Endothelial cell of umbilical vein (primary cell): ENCODE measurements at regions of chr16 and their contacts with region 1.

Region 1: DNA sequence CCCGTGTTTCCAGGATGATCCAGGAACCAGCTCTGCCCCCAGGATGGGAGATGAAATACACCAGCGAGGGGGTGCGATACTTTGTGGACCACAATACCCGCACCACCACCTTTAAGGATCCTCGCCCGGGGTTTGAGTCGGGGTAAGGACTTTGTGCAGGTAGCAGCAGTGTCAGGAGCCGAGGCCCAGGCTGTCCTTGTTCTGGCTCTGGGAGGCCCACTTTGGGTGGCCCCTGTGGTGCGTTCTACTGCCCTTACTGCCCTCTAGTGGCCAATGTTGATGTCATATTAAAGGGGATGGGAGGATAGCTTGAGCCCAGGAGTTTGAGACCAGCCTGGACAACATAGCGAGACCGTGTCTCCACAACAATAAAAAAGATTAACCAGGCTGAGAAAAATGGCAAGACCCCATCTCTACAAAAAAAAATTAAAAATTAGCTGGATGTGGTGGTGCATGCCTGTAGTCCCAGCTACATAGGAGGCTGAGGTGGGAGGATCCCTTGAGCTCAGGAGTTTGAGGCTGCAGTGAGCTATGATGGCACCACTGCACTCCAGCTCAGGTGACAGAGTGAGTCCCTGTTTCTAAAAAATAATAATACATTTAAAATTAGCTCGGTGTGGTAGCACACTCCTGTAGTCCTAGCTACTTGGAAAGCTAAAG is 20.9 kb upstream of the CLEC18A start:
- DNase-seq: peak; percentile 58
- H3K4me3 ChIP-seq: no peak overlapping the region
- H3K27ac ChIP-seq: no peak overlapping the region
- H3K4me1 ChIP-seq: peaks cover 3% of the 10 kb centered on the region
- H3K27me3 ChIP-seq: no peaks in the 10 kb centered on the region
- CTCF ChIP-seq: peak; percentile 64 to 72
- POLR2A ChIP-seq: no peak

Region 2: GRCh38 chr16:69554495-69554894 is 375.8 kb before region 1 on chr16:
- CTCF ChIA-PET with region 1: no interaction called
- POLR2A ChIA-PET with region 1: no interaction called
- dilution Hi-C with region 1: no loop called
- intact Hi-C with region 1: no loop called
- DNase-seq: no peak
- H3K4me3 ChIP-seq: no peak overlapping the region
- H3K27ac ChIP-seq: no peak overlapping the region
- H3K4me1 ChIP-seq: no peaks in the 10 kb centered on the region
- H3K27me3 ChIP-seq: no peaks in the 10 kb centered on the region
- CTCF ChIP-seq: no peak
- POLR2A ChIP-seq: no peak

Region 3: DNA sequence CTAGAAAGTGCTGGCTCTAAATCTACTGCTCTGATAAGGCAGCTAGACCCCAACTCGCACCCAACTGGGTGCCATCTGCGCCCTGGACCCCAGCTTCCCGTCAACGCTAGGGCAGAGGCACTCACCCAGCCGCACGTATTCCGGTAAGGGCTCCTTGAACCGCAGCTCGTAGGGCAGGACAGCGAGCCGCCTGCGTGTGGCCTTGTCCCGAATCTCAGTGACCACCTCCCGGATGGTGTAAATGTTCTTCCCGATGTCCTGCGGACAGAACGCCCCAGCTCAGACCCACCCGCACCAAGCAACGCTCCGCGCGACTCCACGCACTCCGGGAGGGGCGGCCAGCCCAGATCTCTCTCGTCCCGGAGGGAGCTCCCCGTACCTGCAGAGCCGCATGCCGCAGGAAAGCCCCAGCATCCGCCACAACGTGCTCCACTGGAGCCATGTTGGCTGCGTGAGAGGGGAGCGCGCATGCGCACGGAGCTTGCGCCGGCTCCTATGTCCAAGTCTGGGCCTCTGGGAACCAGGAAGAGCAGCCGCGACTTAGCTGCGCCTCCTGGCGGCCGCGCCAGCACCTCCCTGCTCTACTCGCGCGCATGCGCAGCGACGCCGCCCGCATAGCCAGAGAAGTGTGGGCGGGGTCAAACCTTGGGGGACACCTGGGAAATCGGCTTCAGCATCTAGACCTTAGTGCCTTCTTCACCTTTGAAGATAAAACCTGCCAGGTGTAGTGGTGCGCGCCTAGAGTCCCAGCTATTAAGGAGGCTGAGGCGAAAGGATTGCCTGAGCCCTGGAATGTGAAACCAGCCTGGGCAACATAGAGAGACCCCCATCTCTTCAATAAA is 175.6 kb before region 1 on chr16 and contains the start of gene NOB1:
- CTCF ChIA-PET with region 1: interaction called, 17 read pairs
- POLR2A ChIA-PET with region 1: no interaction called
- dilution Hi-C with region 1: no loop called
- intact Hi-C with region 1: no loop called
- DNase-seq: peak; percentile 98
- H3K4me3 ChIP-seq: peak within 1 kb of the TSS; percentile 39 to 87 (median 82)
- H3K27ac ChIP-seq: peak within 1 kb of the TSS; percentile 11
- H3K4me1 ChIP-seq: peaks cover 8% of the 10 kb centered on the region
- H3K27me3 ChIP-seq: no peaks in the 10 kb centered on the region
- CTCF ChIP-seq: peak; percentile 99 to 100
- POLR2A ChIP-seq: peak; percentile 97
- total RNA-seq, gene NOB1: 58.6 and 65.4 TPM in 2 replicates

Region 4: DNA sequence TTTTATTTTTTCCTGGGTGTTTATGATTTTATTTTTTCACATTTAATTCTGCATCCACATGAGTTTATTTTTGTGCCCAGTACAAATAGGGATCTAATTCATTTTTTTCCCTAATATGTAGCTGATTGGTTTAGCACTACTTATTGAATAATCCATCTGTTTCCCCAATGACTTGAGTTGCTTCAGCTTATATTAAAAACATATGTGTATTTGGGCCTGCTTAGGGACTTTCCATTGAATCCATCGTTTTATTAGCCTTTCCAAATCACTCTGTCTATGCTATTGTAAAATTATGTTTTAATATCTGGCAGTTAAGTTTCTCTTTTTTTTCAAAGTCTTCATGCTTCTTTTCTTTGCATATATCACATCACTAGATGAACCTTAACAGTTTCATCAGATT is 126.0 kb before region 1 on chr16:
- CTCF ChIA-PET with region 1: interaction called, 320 read pairs
- POLR2A ChIA-PET with region 1: no interaction called
- dilution Hi-C with region 1: no loop called
- intact Hi-C with region 1: no loop called
- DNase-seq: no peak
- H3K4me3 ChIP-seq: no peak overlapping the region
- H3K27ac ChIP-seq: no peak overlapping the region
- H3K4me1 ChIP-seq: no peaks in the 10 kb centered on the region
- H3K27me3 ChIP-seq: no peaks in the 10 kb centered on the region
- CTCF ChIP-seq: no peak
- POLR2A ChIP-seq: no peak

Region 5: GRCh38 chr16:69839798-69840409 is 90.3 kb before region 1 on chr16:
- CTCF ChIA-PET with region 1: interaction called, 13 read pairs
- POLR2A ChIA-PET with region 1: no interaction called
- dilution Hi-C with region 1: no loop called
- intact Hi-C with region 1: no loop called
- DNase-seq: peak; percentile 19
- H3K4me3 ChIP-seq: no peak overlapping the region
- H3K27ac ChIP-seq: no peak overlapping the region
- H3K4me1 ChIP-seq: peaks cover 5% of the 10 kb centered on the region
- H3K27me3 ChIP-seq: no peaks in the 10 kb centered on the region
- CTCF ChIP-seq: no peak
- POLR2A ChIP-seq: no peak

Region 6: DNA sequence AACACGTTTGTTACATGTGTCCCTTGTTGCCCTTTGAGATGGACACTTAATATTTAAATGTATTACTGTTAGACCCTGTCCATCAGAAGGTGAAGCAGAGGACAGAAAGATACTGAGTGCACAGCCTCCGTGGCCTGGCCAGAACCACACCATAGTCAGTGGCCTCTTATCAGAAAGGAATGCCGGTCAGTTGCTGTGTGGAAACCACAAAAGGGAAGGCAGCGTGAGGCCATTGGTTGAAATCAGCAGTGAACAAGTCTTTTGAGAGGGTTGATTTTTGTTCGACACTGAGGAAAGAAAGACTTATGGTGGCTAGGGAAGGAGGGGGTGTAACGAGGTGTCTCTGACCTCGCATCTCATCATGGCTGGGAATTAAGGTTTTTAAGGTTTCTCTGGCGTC is 64.5 kb before region 1 on chr16:
- CTCF ChIA-PET with region 1: interaction called, 14 read pairs
- POLR2A ChIA-PET with region 1: no interaction called
- dilution Hi-C with region 1: no loop called
- intact Hi-C with region 1: no loop called
- DNase-seq: no peak
- H3K4me3 ChIP-seq: no peak overlapping the region
- H3K27ac ChIP-seq: no peak overlapping the region
- H3K4me1 ChIP-seq: no peaks in the 10 kb centered on the region
- H3K27me3 ChIP-seq: no peaks in the 10 kb centered on the region
- CTCF ChIP-seq: no peak
- POLR2A ChIP-seq: no peak

Region 7: DNA sequence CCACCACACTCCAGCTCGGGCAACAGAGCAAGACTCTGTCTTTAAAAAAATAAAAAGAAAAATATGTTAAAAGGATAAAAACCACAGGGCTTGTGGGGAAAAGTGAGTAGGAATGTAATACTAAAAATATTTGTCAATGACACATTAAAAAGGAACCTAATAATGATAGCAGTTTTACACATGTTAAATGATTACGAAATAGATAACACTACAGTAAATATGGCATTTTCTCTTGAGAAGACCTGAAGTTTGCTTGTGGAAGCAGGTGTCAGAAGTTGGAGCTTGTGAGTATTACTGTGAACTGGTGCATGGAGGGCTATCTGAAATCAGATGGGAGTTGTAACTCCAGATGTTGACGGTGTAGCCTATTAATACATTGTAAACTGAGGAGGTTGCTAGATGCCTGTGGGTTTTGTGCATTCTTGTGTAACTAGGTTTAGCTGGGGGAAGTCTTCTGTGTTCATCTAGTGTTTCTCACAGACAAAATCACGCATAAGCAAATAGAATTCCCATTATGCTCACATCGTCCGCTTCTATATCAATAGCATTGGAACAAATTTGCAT is 23.3 kb before region 1 on chr16:
- CTCF ChIA-PET with region 1: interaction called, 32 read pairs
- POLR2A ChIA-PET with region 1: no interaction called
- dilution Hi-C with region 1: no loop called
- intact Hi-C with region 1: no loop called
- DNase-seq: no peak
- H3K4me3 ChIP-seq: no peak overlapping the region
- H3K27ac ChIP-seq: no peak overlapping the region
- H3K4me1 ChIP-seq: no peaks in the 10 kb centered on the region
- H3K27me3 ChIP-seq: no peaks in the 10 kb centered on the region
- CTCF ChIP-seq: no peak
- POLR2A ChIP-seq: no peak